ENCODE measurements at regions of chr5 and their contacts with region 1.

Region 1: DNA sequence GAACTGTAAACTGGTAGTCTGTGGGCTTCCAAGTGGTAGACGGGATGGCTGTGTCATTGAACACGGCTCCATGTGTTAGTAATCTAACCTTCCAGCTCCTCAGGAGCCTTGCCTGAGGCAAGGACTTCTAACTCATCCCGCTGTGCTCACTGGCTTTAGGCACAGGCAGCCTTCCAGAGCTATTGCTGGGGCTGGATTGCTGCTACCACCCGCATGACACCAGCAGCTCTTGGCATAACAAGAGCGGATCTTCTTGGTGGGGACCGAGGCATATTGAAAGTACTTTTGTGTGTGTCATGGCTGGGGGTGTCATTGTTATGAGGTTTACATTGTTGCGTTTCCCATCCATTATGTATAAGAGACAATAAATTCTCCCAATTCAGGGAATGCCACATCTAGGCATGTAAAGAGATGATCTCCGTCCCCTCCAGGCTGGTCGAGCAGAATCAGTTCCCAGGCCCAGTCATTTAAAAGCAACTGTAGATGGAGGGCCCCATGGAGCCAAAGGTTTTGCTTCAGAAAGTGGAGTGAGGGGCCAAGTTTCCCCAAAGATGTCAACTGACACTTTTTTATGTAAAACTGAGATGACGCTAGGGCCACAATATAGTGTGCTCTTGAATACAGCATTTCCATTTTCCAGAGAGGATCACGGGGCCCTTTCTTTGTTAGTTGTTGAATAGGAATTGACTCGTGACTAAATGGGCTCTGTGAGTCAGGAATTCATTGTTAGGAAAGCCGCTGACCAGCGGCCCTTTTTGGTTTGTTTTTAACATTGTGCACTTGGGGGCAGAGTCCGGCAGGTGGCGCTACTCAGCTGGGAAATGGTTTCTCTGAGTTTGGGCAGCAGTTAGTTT is 759.6 kb downstream of the TAF11L14 start:
- DNase-seq: peak in 1 of 2 experiments; percentile 80
- H3K4me3 ChIP-seq: no peak overlapping the region
- H3K27ac ChIP-seq: no peak overlapping the region
- H3K4me1 ChIP-seq: no peaks in the 10 kb centered on the region
- H3K27me3 ChIP-seq: no peaks in the 10 kb centered on the region
- CTCF ChIP-seq: peak; percentile 95

Region 2: GRCh38 chr5:18699681-18700080 is 305.9 kb after region 1 on chr5:
- CTCF ChIA-PET with region 1: no interaction called
- POLR2A ChIA-PET with region 1: no interaction called
- intact Hi-C with region 1: loop called (anchors 1 kb)
- DNase-seq: no peak
- H3K4me3 ChIP-seq: no peak overlapping the region
- H3K27ac ChIP-seq: no peak overlapping the region
- H3K4me1 ChIP-seq: 0 out of 2 replicates have a peak, but pooled peaks cover 4% of the 10 kb centered on the region
- H3K27me3 ChIP-seq: no peaks in the 10 kb centered on the region
- CTCF ChIP-seq: no peak

Region 3: DNA sequence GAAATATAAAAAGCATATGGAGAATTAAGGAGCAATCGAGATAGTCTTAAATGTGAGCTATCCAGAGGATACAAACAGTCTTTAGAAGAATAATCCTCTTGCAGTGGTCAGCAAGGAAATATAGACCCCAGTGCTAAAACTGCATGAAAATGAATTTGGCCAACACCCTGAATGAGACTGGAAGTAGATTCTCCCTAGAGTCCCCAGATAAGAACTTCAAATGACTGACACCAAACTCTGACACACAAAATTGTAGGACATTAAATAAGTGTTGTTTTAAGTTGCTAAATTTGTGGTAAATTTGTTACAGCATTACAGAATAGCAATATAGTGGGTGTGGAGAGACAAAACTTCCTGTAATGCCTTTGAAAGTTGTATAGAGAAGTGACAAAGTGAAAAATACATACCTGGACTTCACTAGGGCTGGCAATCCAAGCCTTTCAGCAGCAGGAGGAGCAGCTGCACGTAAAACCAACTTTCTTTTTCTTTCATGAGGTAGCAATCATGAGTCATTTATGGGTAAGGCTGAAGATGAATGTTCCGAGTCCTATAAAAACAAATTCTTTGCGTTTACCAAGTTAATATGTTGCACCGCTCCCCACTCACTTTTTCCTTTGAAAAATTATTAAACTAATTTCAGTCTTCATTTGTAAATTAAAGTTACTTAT is 378.5 kb after region 1 on chr5:
- CTCF ChIA-PET with region 1: no interaction called
- POLR2A ChIA-PET with region 1: no interaction called
- intact Hi-C with region 1: loop called (anchors 10 kb)
- DNase-seq: peak; percentile 48 to 56
- H3K4me3 ChIP-seq: no peak overlapping the region
- H3K27ac ChIP-seq: no peak overlapping the region
- H3K4me1 ChIP-seq: no peaks in the 10 kb centered on the region
- H3K27me3 ChIP-seq: no peaks in the 10 kb centered on the region
- CTCF ChIP-seq: peak; percentile 55

Region 4: DNA sequence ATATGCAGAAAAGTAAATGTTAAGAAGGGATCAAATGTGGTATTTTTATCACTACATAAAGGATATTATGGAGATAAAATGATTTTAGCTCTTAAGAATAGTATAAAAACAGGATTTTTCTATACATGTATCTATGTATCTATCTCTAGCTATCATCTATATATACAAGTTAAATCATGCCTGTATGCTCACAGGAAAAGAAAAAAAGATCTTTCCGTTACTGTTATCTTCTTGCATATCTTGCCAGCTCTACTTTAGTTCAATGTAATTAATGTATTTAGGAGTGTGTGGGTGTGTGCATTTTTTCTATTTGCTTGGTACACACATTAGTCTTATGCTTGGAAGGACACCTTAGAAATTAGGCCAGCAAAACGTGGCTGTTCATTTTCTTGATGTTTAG is 443.6 kb after region 1 on chr5:
- CTCF ChIA-PET with region 1: no interaction called
- POLR2A ChIA-PET with region 1: no interaction called
- intact Hi-C with region 1: no loop called
- DNase-seq: no peak
- H3K4me3 ChIP-seq: no peak overlapping the region
- H3K27ac ChIP-seq: no peak overlapping the region
- H3K4me1 ChIP-seq: no peaks in the 10 kb centered on the region
- H3K27me3 ChIP-seq: no peaks in the 10 kb centered on the region
- CTCF ChIP-seq: no peak

Region 5: GRCh38 chr5:19322716-19323485 is 929.1 kb after region 1 on chr5:
- CTCF ChIA-PET with region 1: no interaction called
- POLR2A ChIA-PET with region 1: no interaction called
- intact Hi-C with region 1: loop called (anchors 10 kb)
- DNase-seq: peak; percentile 42 to 68
- H3K4me3 ChIP-seq: no peak overlapping the region
- H3K27ac ChIP-seq: no peak overlapping the region
- H3K4me1 ChIP-seq: peaks cover 9% of the 10 kb centered on the region
- H3K27me3 ChIP-seq: no peaks in the 10 kb centered on the region
- CTCF ChIP-seq: no peak